ENCODE measurements at regions of chr10 and their contacts with region 1.

Region 1: DNA sequence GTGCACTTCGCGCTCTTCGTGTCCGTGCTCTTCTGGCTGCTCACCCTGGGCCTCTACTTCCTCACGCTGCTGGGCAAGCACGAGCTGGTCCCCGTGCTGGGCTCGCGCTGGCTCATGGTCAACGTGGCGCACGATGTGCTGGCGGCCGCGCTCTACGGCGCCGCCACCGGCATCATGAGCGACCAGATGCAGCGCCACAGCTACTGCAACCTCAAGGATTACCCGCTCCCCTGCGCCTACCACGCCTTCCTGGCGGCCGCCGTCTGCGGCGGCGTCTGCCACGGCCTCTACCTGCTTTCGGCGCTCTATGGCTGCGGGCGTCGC is 480 bp downstream of the MARVELD1 start:
- DNase-seq: peak; percentile 59
- H3K4me3 Mint-ChIP-seq: peak overlapping the region; percentile 97
- H3K27ac Mint-ChIP-seq: peak overlapping the region; percentile 92
- H3K4me1 Mint-ChIP-seq: peaks cover 60% of the 10 kb centered on the region
- H3K27me3 Mint-ChIP-seq: no peaks in the 10 kb centered on the region
- CTCF ChIP-seq: no peak

Region 2: DNA sequence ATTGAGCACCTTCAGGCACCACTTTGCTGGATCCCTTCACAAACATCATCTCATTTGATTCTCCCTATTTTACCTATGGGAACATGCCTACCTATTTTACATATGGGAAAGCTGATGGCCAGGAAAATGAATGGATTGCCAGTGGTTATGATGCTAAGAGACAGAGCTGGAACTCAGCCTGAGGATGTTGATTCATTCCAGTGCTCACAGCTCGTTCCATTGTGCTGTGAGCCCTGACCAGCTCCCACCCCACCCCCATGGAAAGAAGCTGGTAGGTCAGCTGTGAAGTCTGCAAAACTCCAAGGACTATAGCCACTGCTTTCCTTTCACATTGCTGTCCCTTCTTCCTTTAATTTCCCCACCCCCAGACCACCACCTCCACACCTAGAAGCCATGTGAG is 205.7 kb before region 1 on chr10:
- CTCF ChIA-PET with region 1: no interaction called
- POLR2A ChIA-PET with region 1: no interaction called
- intact Hi-C with region 1: no loop called
- DNase-seq: no peak
- H3K4me3 Mint-ChIP-seq: no peak overlapping the region
- H3K27ac Mint-ChIP-seq: no peak overlapping the region
- H3K4me1 Mint-ChIP-seq: no peaks in the 10 kb centered on the region
- H3K27me3 Mint-ChIP-seq: no peaks in the 10 kb centered on the region
- CTCF ChIP-seq: no peak

Region 3: GRCh38 chr10:97640174-97640867 is 73.7 kb before region 1 on chr10 and contains the start of gene PI4K2A:
- CTCF ChIA-PET with region 1: interaction called, 5 read pairs
- POLR2A ChIA-PET with region 1: interaction called, 12 read pairs
- intact Hi-C with region 1: no loop called
- DNase-seq: peak; percentile 99
- H3K4me3 Mint-ChIP-seq: peak within 1 kb of the TSS; percentile 87
- H3K27ac Mint-ChIP-seq: peak within 1 kb of the TSS; percentile 10
- H3K4me1 Mint-ChIP-seq: peaks cover 15% of the 10 kb centered on the region
- H3K27me3 Mint-ChIP-seq: no peaks in the 10 kb centered on the region
- CTCF ChIP-seq: no peak
- total RNA-seq, gene PI4K2A: 23.5 and 26.6 TPM in 2 replicates

Region 4: DNA sequence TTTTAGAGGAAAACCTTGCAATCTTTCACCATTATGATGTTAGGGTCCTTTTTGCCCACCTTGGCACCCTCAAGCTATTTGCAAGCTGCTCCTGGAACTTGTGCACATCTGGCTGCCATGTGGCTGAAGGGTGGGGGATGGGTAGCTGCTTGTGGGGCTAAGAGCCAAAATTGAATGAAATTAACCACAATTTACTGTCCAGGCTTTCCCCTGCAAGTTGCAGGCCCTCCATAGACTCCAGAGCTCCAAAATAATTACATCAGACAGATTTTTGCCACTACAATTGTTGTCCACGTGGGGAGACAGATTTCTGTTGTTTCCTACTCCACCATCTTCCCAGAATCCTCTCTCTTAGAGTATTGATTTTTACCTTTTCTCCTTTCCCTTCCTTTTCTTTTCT is 54.4 kb before region 1 on chr10:
- CTCF ChIA-PET with region 1: no interaction called
- POLR2A ChIA-PET with region 1: no interaction called
- intact Hi-C with region 1: no loop called
- DNase-seq: peak; percentile 48
- H3K4me3 Mint-ChIP-seq: no peak overlapping the region
- H3K27ac Mint-ChIP-seq: no peak overlapping the region
- H3K4me1 Mint-ChIP-seq: peaks cover 5% of the 10 kb centered on the region
- H3K27me3 Mint-ChIP-seq: no peaks in the 10 kb centered on the region
- CTCF ChIP-seq: no peak

Region 5: GRCh38 chr10:97676770-97677581 is 37.0 kb before region 1 on chr10:
- CTCF ChIA-PET with region 1: interaction called, 47 read pairs
- POLR2A ChIA-PET with region 1: interaction called, 915 read pairs
- intact Hi-C with region 1: loop called (anchors 1 kb)
- DNase-seq: peak; percentile 67
- H3K4me3 Mint-ChIP-seq: no peak overlapping the region
- H3K27ac Mint-ChIP-seq: peak overlapping the region; percentile 31
- H3K4me1 Mint-ChIP-seq: peaks cover 18% of the 10 kb centered on the region
- H3K27me3 Mint-ChIP-seq: no peaks in the 10 kb centered on the region
- CTCF ChIP-seq: peak; percentile 82

Region 6: DNA sequence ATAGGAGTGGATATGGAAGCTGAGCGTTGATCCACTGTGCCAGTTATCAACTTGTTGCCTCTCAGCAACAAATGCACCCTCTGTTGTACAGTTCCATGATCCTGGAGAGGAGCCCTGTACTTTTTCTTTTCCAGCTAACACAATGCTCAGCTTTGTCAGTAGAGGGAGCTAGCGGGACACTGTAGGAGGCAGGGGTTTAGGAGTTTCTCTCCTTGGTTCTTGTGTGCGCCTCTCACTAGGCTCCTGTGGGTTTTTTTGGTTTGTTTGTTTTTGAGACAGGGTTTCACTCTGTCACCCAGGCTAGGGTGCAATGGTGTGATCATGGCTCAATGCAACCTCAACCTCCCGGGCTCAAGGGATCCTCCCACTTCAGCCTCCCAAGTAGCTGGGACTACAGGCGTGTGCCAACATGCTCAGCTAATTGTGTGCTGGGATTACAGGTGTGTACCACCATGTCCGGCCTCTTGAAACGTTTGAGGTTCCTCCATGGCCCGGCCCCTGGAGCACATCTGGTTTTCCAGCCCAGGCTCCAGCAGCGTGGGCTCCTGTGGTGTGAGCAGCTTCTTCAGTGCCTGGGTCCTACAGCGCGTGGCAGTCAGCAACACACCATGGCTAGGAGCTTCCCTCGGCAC is 12.5 kb before region 1 on chr10:
- CTCF ChIA-PET with region 1: interaction called, 97 read pairs
- POLR2A ChIA-PET with region 1: interaction called, 55 read pairs
- intact Hi-C with region 1: no loop called
- DNase-seq: peak; percentile 88
- H3K4me3 Mint-ChIP-seq: no peak overlapping the region
- H3K27ac Mint-ChIP-seq: no peak overlapping the region
- H3K4me1 Mint-ChIP-seq: peaks cover 8% of the 10 kb centered on the region
- H3K27me3 Mint-ChIP-seq: no peaks in the 10 kb centered on the region
- CTCF ChIP-seq: peak; percentile 80

Region 7: GRCh38 chr10:97736902-97737769 is 23.1 kb after region 1 on chr10 and contains the start of gene ZFYVE27:
- CTCF ChIA-PET with region 1: interaction called, 847 read pairs
- POLR2A ChIA-PET with region 1: interaction called, 539 read pairs
- intact Hi-C with region 1: no loop called
- DNase-seq: peak; percentile 93
- H3K4me3 Mint-ChIP-seq: peak within 1 kb of the TSS; percentile 82
- H3K27ac Mint-ChIP-seq: peak within 1 kb of the TSS; percentile 89
- H3K4me1 Mint-ChIP-seq: peaks cover 27% of the 10 kb centered on the region
- H3K27me3 Mint-ChIP-seq: no peaks in the 10 kb centered on the region
- CTCF ChIP-seq: no peak
- total RNA-seq, gene ZFYVE27: 25.7 and 28.7 TPM in 2 replicates

Region 8: DNA sequence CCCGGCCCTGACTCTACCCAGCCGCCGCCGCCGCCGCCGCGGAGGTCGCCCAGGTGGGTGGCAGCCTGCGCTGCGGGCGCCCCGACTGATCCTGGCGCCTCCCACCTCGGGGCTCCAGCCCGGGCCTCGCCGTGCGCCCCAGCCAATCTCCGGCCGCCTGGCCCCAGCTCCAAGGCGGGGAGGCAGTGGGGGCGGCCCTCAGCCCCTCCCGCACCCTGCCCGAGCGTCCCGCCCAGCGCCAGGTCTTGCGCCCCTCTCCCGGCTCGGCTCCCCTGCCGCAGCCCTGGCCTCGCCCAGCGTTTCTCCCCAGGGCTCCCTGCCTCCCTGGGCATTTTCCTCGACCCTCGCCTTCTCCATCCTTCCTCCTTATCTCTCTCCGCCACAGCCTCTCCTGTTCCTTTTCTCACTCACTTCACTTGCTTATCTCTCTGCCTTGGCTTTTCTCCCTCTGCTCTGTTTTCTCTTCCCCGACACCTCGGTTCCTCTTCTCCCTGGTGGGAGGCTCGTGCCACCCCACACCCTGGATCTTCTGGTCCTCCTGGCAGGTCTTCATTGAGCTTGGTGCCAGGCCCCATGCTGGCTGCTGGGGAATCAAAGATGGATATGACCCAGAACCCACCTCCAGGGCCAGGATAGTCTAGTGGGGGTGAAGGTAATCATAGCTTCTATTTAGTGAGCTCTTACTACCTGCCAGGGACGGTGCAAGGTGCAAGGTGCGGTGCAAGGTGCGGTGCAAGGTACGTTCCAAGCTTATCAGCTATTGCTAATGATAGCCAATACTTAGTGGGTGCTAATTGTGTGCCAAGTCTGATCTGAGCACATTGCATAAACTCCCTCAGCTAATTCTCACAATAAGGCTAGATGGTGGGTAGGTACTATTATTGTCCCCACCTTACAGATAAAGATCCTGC is 58.2 kb after region 1 on chr10 and contains the start of gene SFRP5:
- CTCF ChIA-PET with region 1: no interaction called
- POLR2A ChIA-PET with region 1: no interaction called
- intact Hi-C with region 1: no loop called
- DNase-seq: no peak
- H3K4me3 Mint-ChIP-seq: no peak within 1 kb of the TSS
- H3K27ac Mint-ChIP-seq: no peak within 1 kb of the TSS
- H3K4me1 Mint-ChIP-seq: no peaks in the 10 kb centered on the region
- H3K27me3 Mint-ChIP-seq: peaks cover 39% of the 10 kb centered on the region
- CTCF ChIP-seq: no peak
- total RNA-seq, gene SFRP5: not detected in 2 replicates